CD4-positive, alpha-beta T cell (primary cell): ENCODE measurements at regions of chr7 and their contacts with region 1.

Region 1: GRCh38 chr7:32905175-32905662 is 13.7 kb upstream of the KBTBD2 start:
- DNase-seq: peak; percentile 26 to 94 (median 60)
- ATAC-seq: peak; percentile 84
- H3K4me3 ChIP-seq: peak overlapping the region; percentile 39
- H3K4me3 Mint-ChIP-seq: peak overlapping the region; percentile 78
- H3K27ac ChIP-seq: peak overlapping the region; percentile 13 to 82
- H3K27ac Mint-ChIP-seq: peak overlapping the region; percentile 81
- H3K4me1 ChIP-seq: peaks cover 25% of the 10 kb centered on the region
- H3K4me1 Mint-ChIP-seq: peaks cover 12% of the 10 kb centered on the region
- H3K27me3 ChIP-seq: no peaks in the 10 kb centered on the region
- H3K27me3 Mint-ChIP-seq: no peaks in the 10 kb centered on the region
- CTCF ChIP-seq: no peak

Region 2: GRCh38 chr7:32846701-32847100 is 58.5 kb before region 1 on chr7:
- CTCF ChIA-PET with region 1: interaction called, 4 read pairs
- POLR2A ChIA-PET with region 1: interaction called, 3 read pairs
- intact Hi-C with region 1: loop called in 1 of 2 experiments (anchors 5 kb)
- DNase-seq: peak; percentile 84 to 97 (median 91)
- ATAC-seq: peak; percentile 100
- H3K4me3 ChIP-seq: no peak overlapping the region
- H3K4me3 Mint-ChIP-seq: no peak overlapping the region
- H3K27ac ChIP-seq: no peak overlapping the region
- H3K27ac Mint-ChIP-seq: no peak overlapping the region
- H3K4me1 ChIP-seq: peaks cover 5% of the 10 kb centered on the region
- H3K4me1 Mint-ChIP-seq: peaks cover 6% of the 10 kb centered on the region
- H3K27me3 ChIP-seq: peaks cover 3 to 4% of the 10 kb centered on the region in 2 experiments
- H3K27me3 Mint-ChIP-seq: peaks cover 28% of the 10 kb centered on the region
- CTCF ChIP-seq: peak; percentile 90